Testis (tissue), 5 donors: ENCODE measurements at regions of chr19 and their contacts with region 1.

Region 1: DNA sequence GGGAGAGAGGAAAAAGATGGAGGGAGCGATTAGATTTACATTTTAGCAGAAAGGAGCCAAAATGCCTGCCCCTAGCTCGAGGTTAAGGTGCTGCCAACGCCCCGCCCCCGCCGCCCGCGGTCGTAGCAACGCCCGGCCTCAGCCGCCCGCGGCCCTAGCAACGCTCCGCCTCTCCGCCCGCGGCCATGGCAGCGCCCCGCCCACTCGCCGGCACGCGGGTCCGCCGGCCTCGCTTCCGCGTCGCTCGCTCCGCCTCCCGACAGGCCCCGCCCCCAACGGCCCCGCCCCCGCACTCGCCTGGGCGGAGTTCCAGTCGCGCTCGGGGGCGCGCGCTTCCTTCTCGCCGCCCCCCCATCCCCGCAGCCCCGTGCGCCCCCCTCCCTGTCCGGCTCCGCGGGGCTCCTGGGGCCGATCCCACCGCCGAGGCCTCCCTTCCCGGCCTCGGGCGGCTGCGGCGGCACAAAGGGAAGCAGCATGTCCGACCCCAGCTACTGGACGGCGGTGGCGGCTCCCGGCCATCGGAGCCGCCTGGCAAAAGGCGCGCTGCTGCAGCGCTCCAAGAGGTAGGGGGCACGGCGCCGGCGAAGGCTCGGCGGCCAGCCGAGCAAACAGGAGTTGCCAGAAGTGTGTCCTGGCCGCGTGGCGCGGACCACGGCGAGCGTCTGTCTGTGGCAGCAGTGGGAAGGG is 20.3 kb downstream of the MAST3 start:
- DNase-seq: peak; percentile 92
- H3K4me3 ChIP-seq: peak overlapping the region; percentile 76 to 79
- H3K27ac ChIP-seq: peak overlapping the region in 1 of 2 donors; percentile 61
- H3K4me1 ChIP-seq: peaks cover 21% of the 10 kb centered on the region
- H3K27me3 ChIP-seq: no peaks in the 10 kb centered on the region
- CTCF ChIP-seq: no peak
- POLR2A ChIP-seq: no peak

Region 2: DNA sequence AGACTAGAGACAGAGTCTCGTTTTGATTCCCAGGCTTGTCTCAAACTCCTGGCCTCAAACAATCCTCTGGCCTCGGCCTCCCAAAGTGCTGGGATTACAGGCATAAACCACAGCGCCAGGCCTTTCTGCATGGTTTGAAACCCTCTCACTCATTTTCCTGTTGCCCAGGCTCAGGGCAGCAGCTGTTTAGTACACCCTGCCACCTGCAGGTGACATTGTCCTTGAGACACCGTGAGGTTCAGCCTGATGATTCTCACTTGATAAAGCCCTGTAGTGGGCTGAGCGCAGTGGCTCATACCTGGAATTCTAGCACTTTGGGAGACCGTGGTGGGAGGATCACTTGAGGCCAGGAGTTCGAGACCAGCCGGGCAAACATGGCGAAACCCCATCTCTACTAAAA is 43.6 kb before region 1 on chr19:
- intact Hi-C with region 1: no loop called
- DNase-seq: no peak
- H3K4me3 ChIP-seq: no peak overlapping the region
- H3K27ac ChIP-seq: no peak overlapping the region
- H3K4me1 ChIP-seq: no peaks in the 10 kb centered on the region
- H3K27me3 ChIP-seq: no peaks in the 10 kb centered on the region
- CTCF ChIP-seq: no peak
- POLR2A ChIP-seq: no peak

Region 3: GRCh38 chr19:18160971-18161635 is 43.3 kb after region 1 on chr19:
- intact Hi-C with region 1: loop called (anchors 10 kb)
- DNase-seq: peak; percentile 80
- H3K4me3 ChIP-seq: peak overlapping the region; percentile 46 to 50
- H3K27ac ChIP-seq: peak overlapping the region; percentile 67 to 83
- H3K4me1 ChIP-seq: peaks cover 29% of the 10 kb centered on the region
- H3K27me3 ChIP-seq: no peaks in the 10 kb centered on the region
- CTCF ChIP-seq: peak; percentile 13 to 86 (median 70)
- POLR2A ChIP-seq: no peak

Region 4: GRCh38 chr19:18174983-18175382 is 57.1 kb after region 1 on chr19:
- intact Hi-C with region 1: no loop called
- DNase-seq: no peak
- H3K4me3 ChIP-seq: no peak overlapping the region
- H3K27ac ChIP-seq: no peak overlapping the region
- H3K4me1 ChIP-seq: peaks cover 9% of the 10 kb centered on the region
- H3K27me3 ChIP-seq: no peaks in the 10 kb centered on the region
- CTCF ChIP-seq: no peak
- POLR2A ChIP-seq: no peak

Region 5: DNA sequence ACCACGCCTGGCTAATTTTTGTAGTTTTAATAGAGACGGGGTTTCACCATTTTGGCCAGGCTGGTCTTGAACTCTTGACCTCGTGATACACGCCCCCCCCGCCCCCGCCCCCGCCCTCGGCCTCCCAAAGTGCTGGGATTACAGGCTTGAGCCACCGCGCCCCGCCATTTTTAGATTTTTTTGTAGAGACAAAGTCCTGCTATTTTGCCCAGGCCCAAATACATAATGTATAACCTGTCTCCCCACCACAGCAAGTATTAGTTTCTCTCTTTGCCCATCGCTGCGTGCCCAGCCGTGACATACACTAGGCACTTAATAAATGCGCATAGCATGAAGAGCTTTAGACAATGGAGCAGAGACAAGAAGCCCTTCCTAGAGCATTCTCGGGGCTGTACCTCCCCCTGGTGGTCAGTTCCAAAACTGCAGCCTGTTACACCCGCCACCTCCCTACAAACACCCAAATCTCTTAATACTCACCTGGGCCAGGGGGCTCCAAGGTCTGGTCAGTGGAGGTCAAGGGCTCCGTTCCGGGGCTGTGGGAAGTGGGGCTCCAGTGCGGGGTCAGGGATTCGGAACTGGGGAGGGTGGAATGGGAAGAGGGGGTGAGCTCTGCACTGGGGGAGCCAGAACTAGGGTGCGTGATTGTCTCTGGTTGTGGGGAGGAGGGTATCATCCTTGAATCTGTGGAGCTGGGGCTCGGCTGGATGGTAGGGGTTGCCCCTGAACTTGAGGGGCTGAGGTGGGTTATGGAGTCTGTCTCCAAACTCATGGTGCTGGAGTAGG is 133.9 kb after region 1 on chr19:
- intact Hi-C with region 1: loop called (anchors 5 kb)
- DNase-seq: peak; percentile 85
- H3K4me3 ChIP-seq: no peak overlapping the region
- H3K27ac ChIP-seq: no peak overlapping the region
- H3K4me1 ChIP-seq: no peaks in the 10 kb centered on the region
- H3K27me3 ChIP-seq: no peaks in the 10 kb centered on the region
- CTCF ChIP-seq: peak; percentile 96 to 98 (median 97)
- POLR2A ChIP-seq: no peak